CD8-positive, alpha-beta memory T cell (primary cell): ENCODE measurements at regions of chr7 and their contacts with region 1.

Region 1: DNA sequence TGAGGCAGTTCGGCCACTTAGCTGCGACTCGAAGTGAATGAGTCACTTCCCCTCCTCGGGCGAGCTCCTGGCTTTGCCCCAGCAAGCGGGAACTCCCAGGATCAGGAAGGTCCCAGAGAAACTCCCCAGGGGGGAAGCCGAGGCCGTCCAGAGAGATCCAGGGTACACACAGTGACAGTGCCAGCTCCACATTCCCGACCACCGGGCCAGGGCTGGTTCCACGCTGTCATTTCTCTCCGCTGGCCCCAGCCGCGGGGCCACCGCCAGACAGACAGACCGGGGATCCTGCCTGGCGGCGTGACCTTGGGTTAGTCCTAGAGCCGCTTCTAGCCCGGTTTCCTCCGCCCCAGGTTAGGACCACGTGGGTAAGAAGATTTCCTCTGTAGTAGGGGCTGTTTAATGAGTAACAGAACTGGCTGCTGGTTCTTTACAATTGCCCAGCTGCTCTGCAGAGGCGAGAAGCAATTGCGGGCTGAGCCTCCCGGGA is 463 bp upstream of the UPP1 start:
- DNase-seq: no peak
- H3K4me3 ChIP-seq: peak overlapping the region; percentile 74
- H3K4me3 Mint-ChIP-seq: peak overlapping the region; percentile 90 to 98 (median 91)
- H3K27ac ChIP-seq: peak overlapping the region; percentile 81
- H3K27ac Mint-ChIP-seq: peak overlapping the region; percentile 89 to 98 (median 95)
- H3K4me1 ChIP-seq: peaks cover 76% of the 10 kb centered on the region
- H3K4me1 Mint-ChIP-seq: peaks cover 76 to 86% (median 81%) of the 10 kb centered on the region in 3 donors
- H3K27me3 ChIP-seq: no peaks in the 10 kb centered on the region
- H3K27me3 Mint-ChIP-seq: no peaks in the 10 kb centered on the region

Region 2: GRCh38 chr7:48025630-48026029 is 63.0 kb before region 1 on chr7:
- CTCF ChIA-PET with region 1: no interaction called
- POLR2A ChIA-PET with region 1: no interaction called
- DNase-seq: no peak
- H3K4me3 ChIP-seq: no peak overlapping the region
- H3K4me3 Mint-ChIP-seq: no peak overlapping the region
- H3K27ac ChIP-seq: no peak overlapping the region
- H3K27ac Mint-ChIP-seq: no peak overlapping the region
- H3K4me1 ChIP-seq: no peaks in the 10 kb centered on the region
- H3K4me1 Mint-ChIP-seq: no peaks in the 10 kb centered on the region
- H3K27me3 ChIP-seq: no peaks in the 10 kb centered on the region
- H3K27me3 Mint-ChIP-seq: peaks cover 9 to 54% of the 10 kb centered on the region in 2 donors

Region 3: GRCh38 chr7:48101968-48102367 is 13.4 kb after region 1 on chr7:
- CTCF ChIA-PET with region 1: interaction called, 34 read pairs
- POLR2A ChIA-PET with region 1: interaction called, 6 read pairs
- DNase-seq: no peak
- H3K4me3 ChIP-seq: no peak overlapping the region
- H3K4me3 Mint-ChIP-seq: no peak overlapping the region
- H3K27ac ChIP-seq: no peak overlapping the region
- H3K27ac Mint-ChIP-seq: peak overlapping the region; percentile 56 to 94 (median 79)
- H3K4me1 ChIP-seq: peaks cover 35% of the 10 kb centered on the region
- H3K4me1 Mint-ChIP-seq: peaks cover 48 to 59% (median 56%) of the 10 kb centered on the region in 3 donors
- H3K27me3 ChIP-seq: no peaks in the 10 kb centered on the region
- H3K27me3 Mint-ChIP-seq: no peaks in the 10 kb centered on the region